AG04449 (cell line): ENCODE measurements at regions of chr1 and their contacts with region 1.

Region 1: GRCh38 chr1:8848663-8849386 is 29.7 kb downstream of the ENO1 start:
- DNase-seq: peak; percentile 69
- H3K4me3 ChIP-seq: no peak overlapping the region
- CTCF ChIP-seq: peak; percentile 98

Region 2: GRCh38 chr1:8560611-8561544 is 287.9 kb before region 1 on chr1:
- CTCF ChIA-PET with region 1: interaction called, 77 read pairs
- POLR2A ChIA-PET with region 1: no interaction called
- DNase-seq: no peak
- H3K4me3 ChIP-seq: no peak overlapping the region
- CTCF ChIP-seq: peak; percentile 71

Region 3: DNA sequence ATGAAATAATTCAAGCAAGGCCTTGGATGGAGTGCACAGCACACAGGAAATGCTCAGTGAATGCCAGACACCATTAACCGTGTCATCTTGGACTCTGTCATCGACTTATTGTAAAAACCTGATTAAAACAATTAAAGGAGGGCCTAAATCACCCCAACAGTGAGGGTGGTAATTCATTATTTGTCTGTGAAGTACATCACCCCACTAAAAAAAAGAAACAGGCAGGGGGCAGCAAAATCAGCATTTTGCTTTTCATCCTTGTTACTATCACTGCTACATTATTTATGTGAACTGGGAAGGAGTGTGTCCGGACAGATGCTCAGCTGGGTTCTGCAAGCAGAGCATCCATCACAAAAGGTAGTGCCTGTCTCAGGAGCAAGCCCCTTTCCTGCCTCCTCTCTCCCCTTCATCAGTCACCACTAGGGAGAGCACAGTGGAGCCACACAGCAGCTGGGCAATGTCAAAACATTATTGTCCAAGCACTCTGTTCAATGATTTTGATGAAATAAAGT is 129.9 kb before region 1 on chr1:
- CTCF ChIA-PET with region 1: interaction called, 15 read pairs
- POLR2A ChIA-PET with region 1: no interaction called
- DNase-seq: no peak
- H3K4me3 ChIP-seq: no peak overlapping the region
- CTCF ChIP-seq: no peak

Region 4: GRCh38 chr1:8752921-8753713 is 95.7 kb before region 1 on chr1:
- CTCF ChIA-PET with region 1: interaction called, 10 read pairs
- POLR2A ChIA-PET with region 1: no interaction called
- DNase-seq: no peak
- H3K4me3 ChIP-seq: no peak overlapping the region
- CTCF ChIP-seq: no peak

Region 5: GRCh38 chr1:8814865-8815264 is 34.0 kb before region 1 on chr1:
- CTCF ChIA-PET with region 1: interaction called, 19 read pairs
- POLR2A ChIA-PET with region 1: interaction called, 3 read pairs
- DNase-seq: no peak
- H3K4me3 ChIP-seq: no peak overlapping the region
- CTCF ChIP-seq: no peak

Region 6: DNA sequence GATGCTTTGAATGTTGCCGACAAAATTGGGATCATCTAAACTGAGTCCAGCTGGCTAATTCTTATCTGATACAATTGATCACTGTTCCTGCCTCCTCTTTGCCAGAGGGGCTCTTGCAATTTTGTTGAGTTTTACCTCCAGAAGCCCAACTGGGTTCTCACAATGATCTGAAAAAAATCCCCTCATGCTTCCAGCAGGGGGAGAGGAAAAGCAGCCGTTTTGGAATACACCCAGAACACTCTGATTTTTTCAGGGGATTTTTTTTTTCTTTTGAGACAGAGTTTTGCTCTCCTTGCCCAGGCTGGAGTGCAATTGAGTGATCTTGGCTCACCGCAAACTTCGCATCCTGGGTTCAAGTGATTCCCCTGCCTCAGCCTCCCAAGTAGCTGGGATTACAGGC is 17.5 kb before region 1 on chr1:
- CTCF ChIA-PET with region 1: interaction called, 110 read pairs
- POLR2A ChIA-PET with region 1: no interaction called
- DNase-seq: no peak
- H3K4me3 ChIP-seq: no peak overlapping the region
- CTCF ChIP-seq: peak; percentile 22

Region 7: GRCh38 chr1:8873506-8874229 is 24.8 kb after region 1 on chr1:
- CTCF ChIA-PET with region 1: interaction called, 14 read pairs
- POLR2A ChIA-PET with region 1: interaction called, 3 read pairs
- DNase-seq: peak; percentile 86
- H3K4me3 ChIP-seq: peak overlapping the region; percentile 30
- CTCF ChIP-seq: no peak

Region 8: DNA sequence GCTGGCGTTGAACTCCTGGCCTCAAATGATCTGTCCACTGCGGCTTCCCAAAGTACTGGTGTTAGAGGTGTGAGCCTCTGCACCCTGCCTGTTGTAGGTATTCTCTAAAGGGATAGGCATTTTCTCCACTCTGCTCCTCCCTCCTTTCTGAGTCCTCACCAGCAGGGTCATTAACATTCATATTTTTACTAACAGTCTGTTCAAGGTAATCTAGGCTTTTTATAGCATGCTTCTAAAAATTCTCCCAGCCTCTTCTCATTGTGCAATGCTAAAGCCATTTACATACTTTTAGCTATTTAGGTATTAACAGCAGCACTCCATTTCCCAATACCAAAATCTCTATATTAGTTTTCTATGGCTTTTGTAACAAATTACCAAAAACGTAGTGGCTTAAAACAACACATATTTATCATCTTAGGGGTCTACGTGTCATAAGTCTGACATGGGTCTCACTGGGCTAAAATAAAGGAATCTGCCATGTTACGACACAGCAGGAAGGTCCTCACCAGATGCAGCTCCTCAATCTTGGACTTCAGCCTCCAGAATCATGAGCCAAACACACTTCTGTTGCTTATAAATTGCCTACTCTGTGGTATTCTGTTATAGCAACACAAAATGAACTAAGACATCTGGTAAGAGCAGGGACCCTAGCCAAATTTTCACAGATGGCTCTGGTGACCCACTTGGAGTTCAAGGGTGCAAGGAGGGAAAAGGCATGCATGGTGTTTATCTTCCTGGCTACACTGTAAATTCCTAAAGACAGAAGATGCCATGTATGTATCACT is 180.3 kb after region 1 on chr1:
- CTCF ChIA-PET with region 1: no interaction called
- POLR2A ChIA-PET with region 1: no interaction called
- DNase-seq: no peak
- H3K4me3 ChIP-seq: no peak overlapping the region
- CTCF ChIP-seq: no peak

Region 9: DNA sequence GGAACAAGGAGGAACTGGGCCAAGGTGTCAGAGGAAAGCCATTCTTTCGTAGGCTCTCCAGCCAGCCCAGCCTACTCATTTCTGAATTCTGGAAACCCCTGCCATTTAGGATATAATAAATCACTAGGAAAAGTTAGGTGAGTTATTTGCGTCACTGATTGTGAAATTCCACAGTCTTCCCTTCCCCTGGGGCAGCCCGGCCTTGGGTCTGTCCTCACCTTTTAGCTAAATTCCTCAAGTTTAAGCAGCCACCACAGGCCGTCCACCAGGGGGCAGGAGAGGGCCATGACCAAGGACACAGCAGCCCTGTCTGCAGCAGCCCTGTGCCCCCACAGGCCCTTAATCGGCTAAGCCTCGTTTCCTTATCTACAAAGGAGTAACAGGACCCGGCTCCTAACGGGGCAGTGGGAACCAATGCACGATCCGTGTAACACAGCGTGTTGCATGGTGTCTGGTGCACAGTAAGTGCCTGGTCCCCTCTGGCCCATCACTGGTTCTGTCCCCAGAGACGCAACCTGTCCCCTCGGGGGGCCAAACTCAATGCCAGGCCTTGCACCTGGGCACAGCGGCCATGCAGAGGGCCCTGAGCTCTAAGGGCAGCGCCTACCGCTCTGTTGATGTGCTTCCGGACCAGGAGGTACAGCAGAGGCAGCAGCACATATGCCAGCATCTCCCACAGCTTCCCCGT is 262.0 kb after region 1 on chr1:
- CTCF ChIA-PET with region 1: no interaction called
- POLR2A ChIA-PET with region 1: no interaction called
- DNase-seq: peak; percentile 34
- H3K4me3 ChIP-seq: no peak overlapping the region
- CTCF ChIP-seq: peak; percentile 92